ACHN (cell line): ENCODE measurements at regions of chr7 and their contacts with region 1.

Region 1: DNA sequence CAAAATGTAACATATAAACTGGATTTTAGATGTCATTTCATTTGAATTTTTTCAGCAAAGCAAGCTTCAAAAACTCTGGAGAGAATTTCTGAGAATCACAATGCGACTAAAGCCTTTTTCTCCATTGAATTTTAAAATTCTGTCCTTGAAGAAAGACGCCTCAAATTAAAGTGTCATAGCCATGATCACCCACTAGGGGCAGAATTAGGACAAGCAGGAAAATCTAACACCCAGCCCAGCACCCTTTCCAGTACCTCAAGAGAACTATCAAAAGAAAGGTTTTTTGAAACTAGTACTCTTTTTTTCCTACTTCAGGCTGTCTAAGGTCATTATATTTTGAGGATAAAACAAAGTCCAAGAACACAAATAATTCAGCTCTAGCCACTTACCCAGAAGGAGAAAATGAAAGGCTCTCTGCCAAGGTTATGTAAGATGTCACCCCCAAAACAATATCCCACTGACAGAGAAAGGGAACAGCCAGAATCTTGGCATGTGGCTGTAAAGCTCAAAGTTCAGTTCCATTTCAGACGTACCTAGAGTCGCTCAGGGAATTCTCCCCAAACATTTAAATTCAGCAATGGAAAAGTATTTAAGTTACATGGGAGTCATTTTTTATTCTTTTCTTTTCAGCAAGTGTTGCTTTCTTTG is 299.4 kb downstream of the SNX13 start:
- DNase-seq: peak; percentile 61

Region 2: DNA sequence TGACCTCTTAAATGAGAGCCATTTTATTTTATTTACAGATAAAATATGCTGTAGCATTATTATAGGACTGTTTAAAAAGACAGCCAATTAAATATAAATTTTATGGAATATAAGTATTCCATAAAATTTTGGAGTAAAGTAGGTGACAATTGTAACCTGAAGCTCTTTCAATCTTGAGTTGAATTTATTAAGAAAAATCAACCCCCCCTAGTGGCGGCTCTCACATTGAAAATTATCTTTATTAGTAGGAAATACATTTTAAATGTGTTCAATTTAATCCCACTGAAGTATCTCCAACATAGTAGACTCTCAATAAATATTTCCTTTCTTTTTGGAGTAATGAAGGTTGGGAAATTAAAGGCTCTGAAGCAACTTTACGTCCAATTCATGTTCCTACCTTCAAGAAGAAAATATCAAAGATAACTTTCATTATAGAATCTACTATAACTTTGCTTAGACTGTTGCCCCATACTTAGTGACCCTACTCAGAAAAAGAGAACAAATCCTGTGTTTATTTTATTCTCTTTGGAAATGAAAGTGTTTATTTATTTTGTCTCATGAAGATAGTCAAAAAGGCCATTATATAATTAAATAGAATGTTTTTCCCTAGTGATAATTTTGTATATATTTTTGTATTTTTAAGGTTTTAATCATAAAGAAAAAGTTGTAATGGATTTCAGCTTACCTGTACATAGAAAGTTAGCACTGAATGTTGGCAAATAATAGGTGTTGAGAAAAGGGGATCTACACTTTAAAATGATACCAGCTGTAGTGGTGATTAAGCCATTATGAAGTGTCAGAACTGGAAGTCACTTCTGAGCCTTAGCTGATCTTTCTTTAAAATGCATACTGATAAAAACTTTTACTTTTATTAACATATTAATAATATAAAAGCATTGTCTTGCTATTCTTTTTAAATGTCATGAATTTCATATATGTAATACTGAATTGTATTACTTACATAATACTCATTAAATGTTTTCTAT is 339.1 kb before region 1 on chr7:
- in situ Hi-C with region 1: loop called (anchors 25 kb)
- DNase-seq: peak; percentile 73

Region 3: DNA sequence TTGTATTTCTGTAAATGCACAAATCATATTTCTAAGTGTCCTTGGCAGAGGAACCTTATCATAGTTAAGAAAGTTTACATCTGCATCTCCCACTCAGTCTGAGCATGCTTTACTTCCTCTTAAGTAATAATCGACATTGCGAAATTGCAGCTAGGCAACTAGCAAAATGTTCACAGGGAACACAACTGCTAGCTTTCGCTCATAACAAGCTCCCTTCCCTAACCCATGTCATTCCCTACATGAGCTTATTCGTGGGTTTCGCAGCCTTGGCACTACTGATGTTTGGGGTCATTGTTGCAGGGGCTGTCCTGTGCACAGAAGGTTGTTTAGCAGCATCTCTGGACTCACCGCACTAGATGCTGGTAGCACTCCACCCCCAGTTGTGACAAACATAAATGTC is 270.8 kb before region 1 on chr7:
- in situ Hi-C with region 1: no loop called
- DNase-seq: peak; percentile 27